Mammary epithelial cell (primary cell): ENCODE measurements at regions of chr6 and their contacts with region 1.

Region 1: DNA sequence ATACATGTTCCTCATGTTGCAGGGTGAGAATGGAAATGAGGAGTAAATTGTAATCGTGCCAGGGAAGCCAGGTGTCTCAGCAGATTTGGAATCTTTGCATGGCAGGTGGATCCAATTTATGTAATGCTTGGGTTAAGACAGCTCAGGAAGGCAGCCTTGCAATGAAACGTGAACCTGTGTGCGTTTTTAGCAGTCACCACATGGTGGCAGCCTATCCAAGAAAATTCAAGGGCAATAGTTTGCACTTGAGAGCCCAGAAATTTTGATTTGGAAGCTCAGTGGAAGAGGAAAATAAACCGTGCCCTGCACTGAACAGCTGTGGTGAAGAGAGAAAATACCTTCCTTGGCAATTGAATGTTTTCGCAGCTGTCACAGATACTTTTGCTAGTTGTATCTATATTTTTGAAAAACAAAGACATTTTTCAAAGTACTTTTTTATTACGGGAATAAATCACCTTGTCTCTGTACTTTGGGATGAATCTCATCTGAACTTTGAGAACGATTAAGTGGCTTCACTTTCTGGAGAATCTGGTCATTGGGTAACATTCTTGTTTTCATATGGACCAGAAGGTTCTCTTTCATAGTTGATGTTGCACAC is 26.5 kb downstream of the MTHFD1L start:
- DNase-seq: peak; percentile 57
- H3K4me3 ChIP-seq: no peak overlapping the region
- H3K27ac ChIP-seq: no peak overlapping the region
- H3K4me1 ChIP-seq: peaks cover 7% of the 10 kb centered on the region
- H3K27me3 ChIP-seq: no peaks in the 10 kb centered on the region
- CTCF ChIP-seq: peak; percentile 84 to 90

Region 2: DNA sequence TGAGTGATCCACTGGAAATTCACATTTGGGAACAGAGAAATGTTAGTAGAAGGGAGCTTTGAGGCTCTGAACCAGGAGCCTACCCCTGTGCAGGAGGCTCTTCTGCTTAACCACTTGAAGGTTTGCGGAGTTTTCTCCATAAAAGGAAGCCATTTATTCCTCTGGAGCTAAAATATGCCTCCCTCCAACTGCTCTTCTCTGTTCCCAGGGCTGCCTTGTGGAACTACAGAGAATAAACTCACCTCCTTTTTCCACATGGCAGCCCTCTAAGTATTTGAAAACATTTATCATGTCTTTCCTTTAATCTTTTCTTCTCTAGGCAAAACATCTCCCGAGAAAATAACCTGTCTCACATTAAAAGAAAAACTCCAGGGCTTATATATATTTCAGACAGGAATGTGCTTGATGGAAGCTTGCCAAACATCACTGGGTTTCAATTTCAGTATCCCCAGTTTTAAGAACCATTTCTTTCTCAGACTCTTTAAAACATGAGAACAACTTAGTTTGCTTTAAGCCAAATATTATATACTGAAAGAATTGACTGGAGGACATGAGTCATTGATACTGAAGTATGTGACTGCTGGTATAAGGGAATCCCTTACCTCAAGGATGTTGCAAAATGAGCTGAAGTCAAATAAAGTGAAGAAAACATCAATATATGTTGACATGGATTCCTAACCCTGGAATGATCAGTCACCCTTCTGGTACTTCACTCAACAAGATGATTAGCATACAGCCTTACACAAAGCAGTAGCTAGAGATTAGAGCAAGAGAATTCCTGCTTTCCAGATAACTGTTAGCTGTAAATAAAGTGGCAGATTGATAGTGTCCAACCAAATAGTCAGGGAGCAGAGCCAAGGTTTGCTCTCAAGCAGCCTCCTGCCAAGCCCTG is 425.4 kb after region 1 on chr6:
- CTCF ChIA-PET with region 1: no interaction called
- dilution Hi-C with region 1: loop called (anchors 10 kb)
- in situ Hi-C with region 1: no loop called
- intact Hi-C with region 1: no loop called
- DNase-seq: peak; percentile 69
- H3K4me3 ChIP-seq: no peak overlapping the region
- H3K27ac ChIP-seq: no peak overlapping the region
- H3K4me1 ChIP-seq: no peaks in the 10 kb centered on the region
- H3K27me3 ChIP-seq: no peaks in the 10 kb centered on the region
- CTCF ChIP-seq: no peak

Region 3: GRCh38 chr6:151330134-151330696 is 438.2 kb after region 1 on chr6:
- CTCF ChIA-PET with region 1: interaction called, 5 read pairs
- dilution Hi-C with region 1: no loop called
- in situ Hi-C with region 1: loop called in 1 of 2 experiments (anchors 10 kb)
- intact Hi-C with region 1: loop called (anchors 1 kb)
- DNase-seq: no peak
- H3K4me3 ChIP-seq: no peak overlapping the region
- H3K27ac ChIP-seq: no peak overlapping the region
- H3K4me1 ChIP-seq: peaks cover 6% of the 10 kb centered on the region
- H3K27me3 ChIP-seq: no peaks in the 10 kb centered on the region
- CTCF ChIP-seq: no peak

Region 4: DNA sequence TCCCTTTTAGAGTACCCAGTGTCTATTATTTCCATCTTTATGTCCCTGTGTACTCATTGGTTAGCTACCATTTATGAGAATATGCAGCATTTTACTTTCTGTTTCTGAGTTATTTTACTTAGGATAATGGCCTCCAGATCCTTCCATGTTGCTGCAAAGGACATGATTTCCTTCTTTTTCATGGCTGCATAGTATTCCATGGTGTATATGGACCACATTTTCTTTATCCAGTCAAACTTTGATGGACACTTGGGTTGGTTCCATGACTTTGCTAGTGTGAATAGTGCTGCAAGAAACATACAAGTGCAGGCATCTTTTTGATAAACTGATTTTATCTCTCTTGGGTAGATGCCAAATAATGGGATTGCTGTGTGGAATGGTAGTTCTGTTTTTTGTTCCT is 443.9 kb after region 1 on chr6:
- CTCF ChIA-PET with region 1: interaction called, 5 read pairs
- dilution Hi-C with region 1: no loop called
- in situ Hi-C with region 1: loop called in 1 of 2 experiments (anchors 10 kb)
- intact Hi-C with region 1: loop called (anchors 1 kb)
- DNase-seq: no peak
- H3K4me3 ChIP-seq: no peak overlapping the region
- H3K27ac ChIP-seq: no peak overlapping the region
- H3K4me1 ChIP-seq: no peaks in the 10 kb centered on the region
- H3K27me3 ChIP-seq: no peaks in the 10 kb centered on the region
- CTCF ChIP-seq: no peak